ENCODE measurements at regions of chr1 and their contacts with region 1.

Region 1: GRCh38 chr1:17335821-17336710 is 28.1 kb downstream of the PADI4 start:
- DNase-seq: peak; percentile 62
- H3K4me3 ChIP-seq: no peak overlapping the region; a peak in 1 of 4 replicates
- H3K27ac ChIP-seq: no peak overlapping the region
- H3K4me1 ChIP-seq: no peaks in the 10 kb centered on the region
- H3K27me3 ChIP-seq: peaks cover 3% of the 10 kb centered on the region; the same call in 1 of the 2 replicates
- CTCF ChIP-seq: peak; percentile 95
- EP300 ChIP-seq: no peak
- RAD21 ChIP-seq: peak; percentile 68

Region 2: GRCh38 chr1:17059739-17060460 is 276.2 kb before region 1 on chr1:
- CTCF ChIA-PET with region 1: interaction called, 11 read pairs
- POLR2A ChIA-PET with region 1: no interaction called
- DNase-seq: peak; percentile 78
- H3K4me3 ChIP-seq: no peak overlapping the region
- H3K27ac ChIP-seq: no peak overlapping the region
- H3K4me1 ChIP-seq: no peaks in the 10 kb centered on the region
- H3K27me3 ChIP-seq: peaks cover 8% of the 10 kb centered on the region; the same call in 1 of the 2 replicates
- CTCF ChIP-seq: peak; percentile 77
- EP300 ChIP-seq: no peak
- RAD21 ChIP-seq: peak; percentile 94

Region 3: GRCh38 chr1:17244816-17245740 is 91.0 kb before region 1 on chr1:
- CTCF ChIA-PET with region 1: interaction called, 10 read pairs
- POLR2A ChIA-PET with region 1: no interaction called
- DNase-seq: peak; percentile 60
- H3K4me3 ChIP-seq: no peak overlapping the region
- H3K27ac ChIP-seq: no peak overlapping the region
- H3K4me1 ChIP-seq: peaks cover 0 to 7% of the 10 kb centered on the region in 2 experiments; a peak in 1 of 4 replicates
- H3K27me3 ChIP-seq: no peaks in the 10 kb centered on the region
- CTCF ChIP-seq: no peak
- EP300 ChIP-seq: no peak
- RAD21 ChIP-seq: no peak

Region 4: DNA sequence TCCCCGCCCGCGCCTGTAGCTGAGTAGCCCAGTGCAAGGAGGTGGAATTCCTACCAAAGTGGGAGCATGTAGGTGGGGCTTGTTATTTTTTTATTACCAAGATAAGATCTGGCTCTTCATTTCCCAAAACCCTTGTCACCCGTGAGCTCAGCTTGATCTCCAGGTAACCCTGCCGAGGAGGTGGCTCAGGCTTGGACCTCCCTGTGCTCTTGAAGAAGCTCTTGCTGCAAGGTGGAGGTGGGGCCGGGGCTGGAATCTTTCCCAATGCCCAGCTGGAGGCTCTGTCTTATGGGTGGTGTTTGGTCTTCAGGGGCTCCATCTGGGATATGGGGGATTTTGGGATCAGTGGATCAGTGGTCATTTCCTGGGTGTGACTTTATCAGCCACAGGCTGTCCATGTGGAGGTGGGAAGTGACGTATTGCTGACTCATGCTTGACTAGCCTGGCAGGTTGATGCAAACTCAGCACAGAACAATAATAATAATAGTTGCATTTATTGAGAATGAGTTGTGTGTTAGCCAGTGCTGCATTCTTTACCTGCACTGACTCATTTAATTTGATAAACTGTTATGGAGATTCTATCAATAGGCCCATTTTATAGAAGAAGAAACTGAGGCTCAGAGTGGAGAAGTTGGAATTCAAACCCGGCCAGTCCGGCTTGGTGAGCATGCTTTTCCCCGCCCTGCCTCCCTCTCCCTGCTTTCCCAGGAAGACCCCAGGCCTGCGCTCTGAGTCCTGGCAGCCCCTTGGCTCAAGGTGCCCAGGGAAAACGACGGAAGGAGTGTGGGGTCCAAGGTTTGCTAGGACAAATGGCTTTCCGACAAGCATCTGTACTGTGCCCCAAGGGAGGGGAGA is 12.3 kb after region 1 on chr1:
- CTCF ChIA-PET with region 1: interaction called, 10 read pairs
- POLR2A ChIA-PET with region 1: no interaction called
- DNase-seq: no peak
- H3K4me3 ChIP-seq: no peak overlapping the region
- H3K27ac ChIP-seq: no peak overlapping the region
- H3K4me1 ChIP-seq: no peaks in the 10 kb centered on the region
- H3K27me3 ChIP-seq: peaks cover 11% of the 10 kb centered on the region; the same call in 1 of the 2 replicates
- CTCF ChIP-seq: no peak
- EP300 ChIP-seq: no peak
- RAD21 ChIP-seq: no peak

Region 5: GRCh38 chr1:17355898-17356297 is 19.8 kb after region 1 on chr1:
- CTCF ChIA-PET with region 1: interaction called, 17 read pairs
- POLR2A ChIA-PET with region 1: no interaction called
- DNase-seq: no peak
- H3K4me3 ChIP-seq: no peak overlapping the region
- H3K27ac ChIP-seq: no peak overlapping the region
- H3K4me1 ChIP-seq: no peaks in the 10 kb centered on the region
- H3K27me3 ChIP-seq: peaks cover 11% of the 10 kb centered on the region; the same call in 1 of the 2 replicates
- CTCF ChIP-seq: no peak
- EP300 ChIP-seq: no peak
- RAD21 ChIP-seq: no peak

Region 6: GRCh38 chr1:17412095-17412844 is 76.2 kb after region 1 on chr1:
- CTCF ChIA-PET with region 1: no interaction called
- POLR2A ChIA-PET with region 1: no interaction called
- DNase-seq: no peak
- H3K4me3 ChIP-seq: no peak overlapping the region
- H3K27ac ChIP-seq: no peak overlapping the region
- H3K4me1 ChIP-seq: peaks cover 0 to 5% of the 10 kb centered on the region in 2 experiments; a peak in 1 of 4 replicates
- H3K27me3 ChIP-seq: no peaks in the 10 kb centered on the region
- CTCF ChIP-seq: no peak
- EP300 ChIP-seq: no peak
- RAD21 ChIP-seq: no peak